H1 (cell line): ENCODE measurements at regions of chr1 and their contacts with region 1.

Region 1: DNA sequence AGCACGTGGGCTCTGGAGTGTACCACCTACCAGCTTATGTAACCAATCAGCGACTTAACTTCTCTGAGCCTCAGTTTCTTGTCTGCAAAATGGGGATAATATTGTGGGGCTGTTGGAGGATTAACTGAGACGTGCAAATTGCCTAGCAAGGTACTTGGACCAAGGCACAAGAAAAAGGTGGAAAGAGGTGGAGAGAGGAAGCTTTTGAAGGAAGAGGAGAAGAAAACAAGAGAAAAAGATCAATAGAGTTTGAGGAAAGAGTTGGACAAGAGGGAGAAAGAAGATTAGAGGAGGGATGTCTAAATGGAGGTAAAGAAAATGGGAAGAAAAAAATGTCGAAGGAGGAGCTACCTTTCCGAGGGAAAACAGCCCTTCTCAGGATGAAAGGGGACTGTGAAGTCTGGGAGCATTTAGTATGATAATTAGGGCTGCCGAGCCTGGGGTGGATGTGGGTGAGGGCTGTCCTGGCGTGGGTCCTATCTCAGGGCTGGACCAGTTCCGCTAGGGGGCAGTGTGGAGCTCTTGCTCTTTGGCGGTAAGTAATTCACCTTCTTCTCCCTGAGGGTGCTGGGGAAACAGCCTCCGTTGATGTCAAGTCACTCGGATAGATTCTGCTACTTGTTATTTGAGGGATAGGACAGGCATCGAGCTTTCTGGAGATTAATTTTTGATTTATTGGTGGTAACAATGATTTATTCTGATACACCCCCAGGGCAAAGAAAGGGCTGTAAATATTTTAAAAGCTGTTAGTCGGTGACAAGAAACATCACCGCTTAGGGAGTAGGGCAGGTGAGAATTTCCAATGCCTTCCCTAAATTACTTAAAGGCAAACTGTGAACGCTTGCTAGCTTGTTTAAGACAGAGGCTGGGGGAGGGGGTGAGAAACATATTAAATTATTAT is 79.0 kb upstream of the NFASC start:
- DNase-seq: peak; percentile 79 to 95
- H3K4me3 ChIP-seq: no peak overlapping the region
- H3K27ac ChIP-seq: no peak overlapping the region
- H3K4me1 ChIP-seq: no peaks in the 10 kb centered on the region
- H3K27me3 ChIP-seq: no peaks in the 10 kb centered on the region; a peak in 2 of 7 replicates
- CTCF ChIP-seq: peak; percentile 79 to 95 (median 91)
- EP300 ChIP-seq: no peak
- POLR2A ChIP-seq: no peak
- RAD21 ChIP-seq: peak; percentile 47 to 62; a peak in 3 of 4 replicates

Region 2: DNA sequence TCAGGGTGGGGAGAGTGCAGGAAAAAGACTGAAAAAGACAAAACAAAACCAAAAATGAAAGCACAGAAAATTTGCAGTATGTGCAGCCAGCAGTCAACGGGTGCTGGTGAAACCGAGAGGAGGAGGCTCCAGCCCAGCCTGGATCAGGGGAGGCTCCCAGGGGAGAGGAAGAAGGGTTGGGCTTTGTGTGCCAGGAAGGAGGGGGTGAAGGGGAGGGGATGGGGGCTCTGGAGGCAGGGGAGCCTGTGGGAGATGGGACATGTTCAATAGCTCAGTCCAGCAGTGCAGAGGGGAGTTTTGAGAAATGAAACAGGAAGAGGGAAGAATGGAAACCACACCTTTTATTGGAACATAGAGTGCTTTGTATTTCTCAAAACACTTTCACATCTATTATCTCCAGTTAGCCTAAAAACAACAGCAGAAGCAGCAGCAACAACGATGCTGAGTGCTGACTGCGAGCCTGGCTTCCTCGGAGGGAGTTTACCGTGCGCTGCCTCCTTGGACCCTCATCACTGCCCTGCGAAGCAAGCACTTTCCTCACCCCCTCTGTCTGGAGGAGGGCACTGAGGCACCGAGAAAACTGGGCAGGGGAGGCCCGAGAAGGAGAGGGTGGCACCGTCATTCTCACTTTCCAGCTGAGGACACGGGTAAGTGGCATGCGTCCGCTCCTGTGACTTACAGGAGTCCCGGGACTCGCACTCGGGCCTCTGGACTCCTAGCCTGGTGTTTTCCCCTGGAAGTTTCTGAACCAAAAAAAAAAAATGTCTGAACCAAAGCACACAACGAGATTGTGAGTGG is 212.6 kb before region 1 on chr1:
- CTCF ChIA-PET with region 1: interaction called, 17 read pairs
- POLR2A ChIA-PET with region 1: no interaction called
- DNase-seq: no peak
- H3K4me3 ChIP-seq: peak overlapping the region in 1 of 4 experiments; percentile 3; a peak in 2 of 8 replicates
- H3K27ac ChIP-seq: no peak overlapping the region
- H3K4me1 ChIP-seq: peaks cover 18 to 40% (median 27%) of the 10 kb centered on the region in 4 experiments
- H3K27me3 ChIP-seq: peaks cover 0 to 12% (median 4%) of the 10 kb centered on the region in 4 experiments; a peak in 3 of 7 replicates
- CTCF ChIP-seq: no peak
- EP300 ChIP-seq: no peak
- POLR2A ChIP-seq: no peak
- RAD21 ChIP-seq: no peak

Region 3: DNA sequence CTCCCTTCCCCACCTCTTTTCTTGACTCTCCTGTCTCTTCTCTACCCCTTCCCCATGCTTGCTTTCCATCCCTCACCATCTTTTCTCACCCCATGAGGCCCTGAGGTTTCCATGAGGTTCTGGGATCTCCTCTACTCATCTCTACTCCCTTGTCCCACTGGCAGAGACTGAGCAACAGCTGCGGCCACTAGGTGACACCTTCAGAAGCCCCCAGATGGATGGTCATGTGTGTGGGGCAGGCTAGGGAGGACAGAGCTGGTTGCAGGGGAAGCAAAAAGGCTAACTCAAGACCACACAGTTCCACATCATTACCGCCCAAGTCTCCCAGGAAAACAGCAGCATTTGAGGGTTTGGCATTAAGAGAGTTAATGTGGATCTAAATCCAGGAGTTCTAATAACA is 151.1 kb before region 1 on chr1:
- CTCF ChIA-PET with region 1: no interaction called
- POLR2A ChIA-PET with region 1: no interaction called
- DNase-seq: no peak
- H3K4me3 ChIP-seq: no peak overlapping the region
- H3K27ac ChIP-seq: no peak overlapping the region
- H3K4me1 ChIP-seq: no peaks in the 10 kb centered on the region
- H3K27me3 ChIP-seq: no peaks in the 10 kb centered on the region
- CTCF ChIP-seq: 0 out of 4 replicates have a peak, but pooled peaks of 1 of the 3 experiments have one; percentile 16
- EP300 ChIP-seq: no peak
- POLR2A ChIP-seq: no peak
- RAD21 ChIP-seq: no peak; a peak in 1 of 4 replicates

Region 4: DNA sequence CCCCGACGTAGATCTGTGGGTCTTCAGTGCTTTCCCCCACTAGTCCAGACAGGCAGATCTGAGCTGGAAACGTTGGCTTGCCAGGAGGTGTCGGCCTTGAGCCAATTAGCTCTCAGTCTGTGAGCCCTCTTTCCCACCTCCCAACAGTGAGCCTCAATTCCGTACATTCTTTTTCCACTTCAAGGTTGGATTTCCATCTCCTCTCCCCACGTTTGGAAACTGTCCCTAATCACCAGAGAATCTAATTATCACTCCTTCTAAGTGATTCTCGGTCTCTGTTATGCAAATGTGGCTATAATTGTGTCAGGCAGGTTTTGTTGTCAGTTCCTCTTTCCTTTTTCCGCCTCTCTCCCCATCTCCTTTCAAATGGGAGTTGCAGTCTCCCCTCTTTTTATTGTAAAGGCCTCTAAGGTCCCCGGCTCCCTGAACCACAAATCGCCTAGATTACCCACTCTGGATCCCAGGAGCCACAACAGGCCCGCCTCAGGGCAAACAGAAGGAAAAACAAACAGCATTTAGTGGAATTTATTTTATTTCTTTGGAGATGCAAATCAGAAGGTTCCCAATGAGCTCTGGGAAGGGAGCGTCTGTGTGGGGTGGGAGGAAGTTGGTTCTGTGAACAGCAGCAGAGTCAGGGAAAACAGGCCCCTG is 76.7 kb before region 1 on chr1:
- CTCF ChIA-PET with region 1: interaction called, 15 read pairs
- POLR2A ChIA-PET with region 1: no interaction called
- DNase-seq: no peak
- H3K4me3 ChIP-seq: peak overlapping the region in 1 of 4 experiments; percentile 38; a peak in 2 of 8 replicates
- H3K27ac ChIP-seq: no peak overlapping the region
- H3K4me1 ChIP-seq: peaks cover 12 to 29% (median 20%) of the 10 kb centered on the region in 4 experiments
- H3K27me3 ChIP-seq: peaks cover 22 to 54% (median 46%) of the 10 kb centered on the region in 4 experiments
- CTCF ChIP-seq: peak; percentile 55 to 72 (median 65)
- EP300 ChIP-seq: no peak
- POLR2A ChIP-seq: no peak
- RAD21 ChIP-seq: peak; percentile 69 to 74

Region 5: GRCh38 chr1:204769997-204770396 is 21.7 kb before region 1 on chr1:
- CTCF ChIA-PET with region 1: interaction called, 32 read pairs
- POLR2A ChIA-PET with region 1: no interaction called
- DNase-seq: no peak
- H3K4me3 ChIP-seq: no peak overlapping the region
- H3K27ac ChIP-seq: no peak overlapping the region
- H3K4me1 ChIP-seq: peaks cover 0 to 2% (median 2%) of the 10 kb centered on the region in 4 experiments; a peak in 2 of 7 replicates
- H3K27me3 ChIP-seq: no peaks in the 10 kb centered on the region
- CTCF ChIP-seq: no peak
- EP300 ChIP-seq: no peak
- POLR2A ChIP-seq: no peak
- RAD21 ChIP-seq: no peak